CD8-positive, alpha-beta T cell (primary cell): ENCODE measurements at regions of chr3 and their contacts with region 1.

Region 1: GRCh38 chr3:128969993-128970739 is 23.7 kb downstream of the CFAP92 start:
- DNase-seq: peak; percentile 30 to 80 (median 68)
- ATAC-seq: peak; percentile 89
- H3K4me3 ChIP-seq: no peak overlapping the region
- H3K4me3 Mint-ChIP-seq: no peak overlapping the region
- H3K27ac ChIP-seq: no peak overlapping the region
- H3K27ac Mint-ChIP-seq: no peak overlapping the region
- H3K4me1 ChIP-seq: peaks cover 6% of the 10 kb centered on the region
- H3K4me1 Mint-ChIP-seq: peaks cover 7% of the 10 kb centered on the region
- H3K27me3 ChIP-seq: peaks cover 0 to 2% of the 10 kb centered on the region in 2 experiments
- H3K27me3 Mint-ChIP-seq: no peaks in the 10 kb centered on the region
- CTCF ChIP-seq: peak; percentile 96

Region 2: DNA sequence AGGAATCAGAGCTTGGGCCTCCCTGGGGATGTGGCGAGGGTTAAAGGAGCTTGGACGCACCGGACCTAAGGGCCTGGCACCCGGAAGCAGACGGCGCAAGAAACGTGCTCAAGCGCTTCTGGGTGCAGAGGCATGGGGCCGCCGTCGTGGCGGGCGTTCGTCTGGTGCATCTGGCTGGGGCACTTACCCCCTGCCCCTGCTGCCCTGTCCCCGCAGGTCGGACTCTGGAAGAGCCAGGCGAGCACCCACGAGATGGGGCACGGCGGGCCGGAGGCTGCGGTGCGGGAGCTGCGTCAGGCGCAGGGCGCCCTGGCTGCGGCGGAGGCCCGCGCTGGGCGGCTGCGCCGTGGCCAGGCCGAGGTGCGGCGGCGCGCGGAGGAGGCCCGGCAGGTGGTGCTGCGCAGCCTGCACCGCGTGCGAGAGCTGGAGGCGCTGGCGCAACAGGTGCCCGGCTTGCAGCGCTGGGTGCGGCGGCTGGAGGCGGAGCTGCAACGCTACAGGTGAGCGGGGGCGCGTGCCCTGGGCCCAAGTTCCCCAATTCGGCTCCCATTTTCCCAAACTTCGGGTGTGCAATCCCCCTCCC is 33.5 kb after region 1 on chr3:
- CTCF ChIA-PET with region 1: interaction called, 183 read pairs
- POLR2A ChIA-PET with region 1: no interaction called
- intact Hi-C with region 1: no loop called
- DNase-seq: peak in 8 of 9 experiments; percentile 38 to 82 (median 60)
- ATAC-seq: peak; percentile 92
- H3K4me3 ChIP-seq: peak overlapping the region in 1 of 2 experiments; percentile 12
- H3K4me3 Mint-ChIP-seq: peak overlapping the region; percentile 70
- H3K27ac ChIP-seq: no peak overlapping the region
- H3K27ac Mint-ChIP-seq: no peak overlapping the region
- H3K4me1 ChIP-seq: peaks cover 43% of the 10 kb centered on the region
- H3K4me1 Mint-ChIP-seq: peaks cover 43% of the 10 kb centered on the region
- H3K27me3 ChIP-seq: peaks cover 5 to 23% of the 10 kb centered on the region in 2 experiments
- H3K27me3 Mint-ChIP-seq: peaks cover 21% of the 10 kb centered on the region
- CTCF ChIP-seq: peak; percentile 34

Region 3: GRCh38 chr3:129039271-129040038 is 69.3 kb after region 1 on chr3:
- CTCF ChIA-PET with region 1: interaction called, 29 read pairs
- POLR2A ChIA-PET with region 1: no interaction called
- intact Hi-C with region 1: no loop called
- DNase-seq: peak in 1 of 9 experiments; percentile 45
- ATAC-seq: no peak
- H3K4me3 ChIP-seq: no peak overlapping the region
- H3K4me3 Mint-ChIP-seq: no peak overlapping the region
- H3K27ac ChIP-seq: no peak overlapping the region
- H3K27ac Mint-ChIP-seq: no peak overlapping the region
- H3K4me1 ChIP-seq: peaks cover 23% of the 10 kb centered on the region
- H3K4me1 Mint-ChIP-seq: peaks cover 21% of the 10 kb centered on the region
- H3K27me3 ChIP-seq: peaks cover 0 to 4% of the 10 kb centered on the region in 2 experiments
- H3K27me3 Mint-ChIP-seq: peaks cover 13% of the 10 kb centered on the region
- CTCF ChIP-seq: no peak

Region 4: GRCh38 chr3:129087138-129087702 is 117.1 kb after region 1 on chr3:
- CTCF ChIA-PET with region 1: interaction called, 17 read pairs
- POLR2A ChIA-PET with region 1: no interaction called
- intact Hi-C with region 1: loop called (anchors 2 to 10 kb)
- DNase-seq: no peak
- ATAC-seq: no peak
- H3K4me3 ChIP-seq: no peak overlapping the region
- H3K4me3 Mint-ChIP-seq: no peak overlapping the region
- H3K27ac ChIP-seq: no peak overlapping the region
- H3K27ac Mint-ChIP-seq: no peak overlapping the region
- H3K4me1 ChIP-seq: peaks cover 5% of the 10 kb centered on the region
- H3K4me1 Mint-ChIP-seq: peaks cover 10% of the 10 kb centered on the region
- H3K27me3 ChIP-seq: no peaks in the 10 kb centered on the region
- H3K27me3 Mint-ChIP-seq: no peaks in the 10 kb centered on the region
- CTCF ChIP-seq: no peak

Region 5: DNA sequence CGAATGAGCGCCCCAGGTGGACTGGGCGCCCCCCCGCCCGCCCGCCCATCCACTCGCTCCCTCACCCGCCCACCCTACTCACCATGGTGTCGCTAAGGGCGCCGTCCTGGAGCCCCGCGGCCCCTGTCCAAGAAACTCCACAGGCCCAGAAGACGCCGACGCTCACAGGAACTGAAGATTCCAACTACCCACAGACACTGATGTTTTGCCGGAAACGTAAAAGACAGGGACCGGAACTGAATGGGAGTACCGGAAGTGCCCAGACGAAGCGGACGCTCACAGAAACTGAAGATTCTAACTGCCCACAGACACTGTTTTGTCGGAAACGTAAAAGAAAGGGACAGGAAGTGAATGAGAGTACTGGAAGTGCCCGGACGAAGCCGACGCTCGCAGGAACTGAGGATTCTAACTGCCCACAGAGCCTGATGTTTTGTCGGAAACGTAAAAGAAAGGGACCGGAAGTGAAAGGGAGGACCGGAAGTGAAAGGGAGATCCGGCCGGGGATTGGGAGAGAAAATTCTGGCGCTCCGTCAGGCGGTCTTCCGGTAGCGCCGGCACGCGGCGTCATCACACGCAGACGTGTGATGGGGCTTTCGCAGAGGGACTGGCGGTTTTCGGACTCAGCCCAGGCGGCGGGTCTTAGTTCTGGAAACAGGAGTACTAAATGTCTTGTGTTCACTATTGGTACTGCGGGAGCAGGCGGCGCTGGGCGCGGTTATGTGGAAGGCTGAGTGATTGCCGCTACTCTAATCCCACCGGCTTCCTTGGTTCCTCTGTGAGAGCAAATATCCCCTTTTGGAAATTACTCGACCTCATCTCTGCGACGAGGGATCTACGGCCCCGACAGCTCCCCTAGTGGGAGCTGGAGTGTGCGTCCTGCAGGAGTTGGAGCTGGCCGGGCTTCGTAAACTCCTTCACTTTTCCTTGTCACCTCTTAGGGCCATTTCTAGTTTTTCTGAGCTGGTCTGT is 191.0 kb after region 1 on chr3 and contains the start of gene ISY1:
- CTCF ChIA-PET with region 1: interaction called, 4 read pairs
- POLR2A ChIA-PET with region 1: interaction called, 5 read pairs
- intact Hi-C with region 1: loop called in 1 of 2 experiments (anchors 1 kb)
- DNase-seq: peak; percentile 71 to 97 (median 86)
- ATAC-seq: peak; percentile 80
- H3K4me3 ChIP-seq: peak within 1 kb of the TSS; percentile 84 to 94
- H3K4me3 Mint-ChIP-seq: peak within 1 kb of the TSS; percentile 95
- H3K27ac ChIP-seq: peak within 1 kb of the TSS; percentile 92 to 99
- H3K27ac Mint-ChIP-seq: peak within 1 kb of the TSS; percentile 96
- H3K4me1 ChIP-seq: peaks cover 18% of the 10 kb centered on the region
- H3K4me1 Mint-ChIP-seq: peaks cover 43% of the 10 kb centered on the region
- H3K27me3 ChIP-seq: no peaks in the 10 kb centered on the region
- H3K27me3 Mint-ChIP-seq: no peaks in the 10 kb centered on the region
- CTCF ChIP-seq: peak; percentile 70
- total RNA-seq, gene ISY1: 35.2 to 38.7 TPM

Region 6: DNA sequence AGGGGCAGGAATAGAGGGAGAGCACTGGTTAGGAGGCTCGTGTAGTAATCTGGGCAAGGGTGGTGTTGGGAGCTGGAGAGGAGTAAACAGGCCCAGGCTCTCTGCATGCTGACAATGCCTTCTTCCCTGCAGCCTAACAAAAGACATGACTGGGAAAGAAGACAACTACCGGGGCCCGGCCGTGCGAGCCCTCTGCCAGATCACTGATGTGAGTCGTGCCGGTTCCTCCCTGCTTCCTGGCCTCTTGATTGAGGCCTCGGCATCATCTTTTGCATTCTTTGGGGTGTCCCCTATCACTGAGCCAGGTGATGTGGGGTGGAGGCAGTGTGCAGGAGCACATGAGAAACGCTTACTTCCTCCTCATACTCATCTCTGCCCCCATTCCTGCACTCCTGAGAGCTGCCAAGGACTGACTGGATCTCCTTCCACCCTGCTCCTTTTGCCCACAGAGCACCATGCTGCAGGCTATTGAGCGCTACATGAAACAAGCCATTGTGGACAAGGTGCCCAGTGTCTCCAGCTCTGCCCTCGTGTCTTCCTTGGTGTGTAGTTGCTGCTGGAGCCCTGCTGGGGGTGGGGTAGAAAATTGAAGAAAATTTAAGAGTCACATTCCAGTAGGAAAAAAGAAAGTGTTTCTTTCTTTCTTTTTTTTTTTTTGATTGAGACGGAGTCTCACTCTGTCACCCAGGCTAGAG is 284.5 kb after region 1 on chr3:
- CTCF ChIA-PET with region 1: interaction called, 203 read pairs
- POLR2A ChIA-PET with region 1: no interaction called
- intact Hi-C with region 1: no loop called
- DNase-seq: no peak
- ATAC-seq: no peak
- H3K4me3 ChIP-seq: no peak overlapping the region
- H3K4me3 Mint-ChIP-seq: no peak overlapping the region
- H3K27ac ChIP-seq: no peak overlapping the region
- H3K27ac Mint-ChIP-seq: no peak overlapping the region
- H3K4me1 ChIP-seq: peaks cover 15% of the 10 kb centered on the region
- H3K4me1 Mint-ChIP-seq: peaks cover 29% of the 10 kb centered on the region
- H3K27me3 ChIP-seq: no peaks in the 10 kb centered on the region
- H3K27me3 Mint-ChIP-seq: no peaks in the 10 kb centered on the region
- CTCF ChIP-seq: no peak

Region 7: GRCh38 chr3:129942296-129942695 is 972.1 kb after region 1 on chr3:
- CTCF ChIA-PET with region 1: no interaction called
- POLR2A ChIA-PET with region 1: no interaction called
- intact Hi-C with region 1: no loop called
- DNase-seq: peak in 5 of 9 experiments; percentile 23 to 54 (median 26)
- ATAC-seq: peak; percentile 65
- H3K4me3 ChIP-seq: no peak overlapping the region
- H3K4me3 Mint-ChIP-seq: no peak overlapping the region
- H3K27ac ChIP-seq: no peak overlapping the region
- H3K27ac Mint-ChIP-seq: no peak overlapping the region
- H3K4me1 ChIP-seq: no peaks in the 10 kb centered on the region
- H3K4me1 Mint-ChIP-seq: no peaks in the 10 kb centered on the region
- H3K27me3 ChIP-seq: no peaks in the 10 kb centered on the region
- H3K27me3 Mint-ChIP-seq: peaks cover 7% of the 10 kb centered on the region
- CTCF ChIP-seq: peak; percentile 37